ENCODE measurements at regions of chr7 and their contacts with region 1.

Region 1: DNA sequence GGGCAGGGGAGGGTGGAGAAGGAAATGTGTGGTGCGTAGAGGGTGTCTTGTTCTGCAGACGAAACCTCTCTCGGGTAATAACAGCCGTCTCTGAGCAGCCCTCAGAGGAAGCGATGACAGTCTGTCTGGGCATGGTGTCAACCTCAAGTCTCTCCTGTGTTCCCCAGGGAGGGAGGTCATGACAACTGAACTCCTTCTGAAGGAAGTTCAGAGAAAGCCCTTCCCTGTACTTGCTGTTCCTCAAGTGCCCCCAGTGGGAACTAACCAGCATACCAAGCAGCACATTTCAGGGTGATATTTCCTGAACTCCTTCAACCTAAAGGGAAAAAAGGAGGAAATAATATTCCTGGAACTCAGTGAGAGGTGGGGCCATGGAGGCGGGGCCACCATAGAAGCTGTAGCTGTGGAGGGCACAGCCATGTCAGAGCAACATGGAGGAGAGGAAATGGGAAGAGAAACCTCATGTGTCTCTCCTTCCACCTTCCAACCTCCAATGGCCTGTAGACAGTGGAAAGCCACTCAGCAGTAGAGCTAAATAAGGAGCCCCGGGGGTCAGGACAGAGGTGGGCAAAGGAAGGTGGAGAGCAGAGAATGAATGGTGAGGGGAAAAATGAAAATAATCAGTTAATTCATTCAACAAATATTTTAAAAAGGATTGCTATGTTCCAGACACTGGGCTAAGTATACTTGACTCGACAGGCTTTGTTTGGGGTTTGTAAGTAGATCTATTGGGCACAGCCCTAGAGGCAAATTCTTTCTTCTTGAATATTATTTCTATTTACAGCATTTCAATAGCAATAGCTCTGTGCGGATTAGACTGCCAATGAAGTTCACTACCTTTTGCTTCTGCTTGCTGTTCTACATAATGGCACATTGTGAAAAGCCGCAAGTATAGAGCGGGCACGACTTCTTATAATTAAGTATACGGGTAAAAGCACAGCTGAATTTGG is 61.0 kb upstream of the AOAH start:
- DNase-seq: peak; percentile 68
- H3K4me3 Mint-ChIP-seq: no peak overlapping the region
- H3K27ac Mint-ChIP-seq: peak overlapping the region; percentile 2
- H3K4me1 Mint-ChIP-seq: peaks cover 71% of the 10 kb centered on the region
- H3K27me3 Mint-ChIP-seq: no peaks in the 10 kb centered on the region

Region 2: DNA sequence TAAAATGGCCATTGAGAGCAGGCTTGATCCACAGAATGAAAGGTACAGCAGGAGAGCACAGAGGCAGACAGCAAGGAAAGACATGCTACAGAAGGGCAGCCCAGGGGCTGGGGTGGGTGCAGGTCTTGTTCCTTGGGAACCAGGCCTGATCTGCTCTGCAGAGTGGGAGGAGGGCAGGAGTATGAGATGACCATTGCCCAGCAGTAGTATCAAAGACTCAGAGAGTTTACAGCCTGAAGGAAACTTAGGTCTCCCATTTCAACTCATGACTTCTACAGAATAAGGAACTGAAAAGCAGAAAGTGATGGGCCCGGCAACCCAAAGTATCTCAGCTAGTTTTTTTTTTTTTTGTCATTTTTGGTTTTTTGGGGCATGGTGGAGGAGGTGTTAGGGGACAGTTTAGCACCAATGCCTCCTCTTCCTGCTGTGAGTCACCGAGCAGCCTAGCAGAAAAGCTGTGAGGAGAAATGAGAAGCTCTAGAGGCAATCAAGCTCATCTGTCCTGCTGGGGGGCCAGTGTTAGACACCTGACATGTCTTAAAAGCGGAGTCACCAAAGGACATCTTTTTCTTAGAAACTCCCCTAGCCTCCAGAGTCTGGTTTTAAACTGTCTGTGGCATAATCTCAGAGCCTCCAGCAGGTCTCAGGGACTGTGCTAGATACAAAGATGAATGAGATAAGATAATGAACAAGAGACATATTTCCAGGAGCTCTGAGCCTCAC is 1056.0 kb before region 1 on chr7:
- CTCF ChIA-PET with region 1: no interaction called
- intact Hi-C with region 1: loop called (anchors 10 kb)
- DNase-seq: peak; percentile 47
- H3K4me3 Mint-ChIP-seq: no peak overlapping the region
- H3K27ac Mint-ChIP-seq: no peak overlapping the region
- H3K4me1 Mint-ChIP-seq: peaks cover 41% of the 10 kb centered on the region
- H3K27me3 Mint-ChIP-seq: no peaks in the 10 kb centered on the region

Region 3: DNA sequence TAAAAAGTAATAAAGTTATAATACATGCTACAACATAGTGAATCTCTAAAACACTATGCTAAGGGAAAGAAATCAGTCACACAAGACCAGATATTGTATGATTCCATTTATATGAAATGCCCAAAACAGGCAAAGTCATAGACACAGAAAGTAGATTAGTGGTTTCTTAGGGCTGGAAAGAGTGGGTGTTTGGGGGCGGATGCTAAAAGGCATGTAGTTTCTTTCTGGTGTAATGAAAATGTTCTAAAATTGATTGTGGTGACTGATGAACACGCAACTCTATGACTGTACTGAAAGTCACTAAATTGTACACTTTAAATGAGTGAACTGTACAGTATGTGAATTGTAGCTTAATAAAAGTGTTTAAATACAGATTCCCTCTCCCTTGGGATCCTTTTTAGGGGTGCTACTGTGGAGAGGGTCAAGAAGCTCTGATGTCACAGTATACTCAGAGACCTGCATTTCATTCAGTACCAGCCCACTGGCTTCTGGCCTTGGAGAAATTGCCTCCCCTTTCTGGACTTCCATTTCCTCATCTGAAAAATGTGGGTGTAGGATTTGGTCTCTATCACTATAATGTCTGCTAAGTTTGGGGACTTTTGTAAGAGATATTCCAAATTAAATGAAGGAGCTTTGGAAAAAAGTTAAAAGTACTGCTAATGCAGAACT is 107.4 kb before region 1 on chr7:
- CTCF ChIA-PET with region 1: no interaction called
- intact Hi-C with region 1: loop called (anchors 2 kb)
- DNase-seq: peak; percentile 79
- H3K4me3 Mint-ChIP-seq: peak overlapping the region; percentile 31
- H3K27ac Mint-ChIP-seq: peak overlapping the region; percentile 57
- H3K4me1 Mint-ChIP-seq: peaks cover 38% of the 10 kb centered on the region
- H3K27me3 Mint-ChIP-seq: peaks cover 2% of the 10 kb centered on the region

Region 4: DNA sequence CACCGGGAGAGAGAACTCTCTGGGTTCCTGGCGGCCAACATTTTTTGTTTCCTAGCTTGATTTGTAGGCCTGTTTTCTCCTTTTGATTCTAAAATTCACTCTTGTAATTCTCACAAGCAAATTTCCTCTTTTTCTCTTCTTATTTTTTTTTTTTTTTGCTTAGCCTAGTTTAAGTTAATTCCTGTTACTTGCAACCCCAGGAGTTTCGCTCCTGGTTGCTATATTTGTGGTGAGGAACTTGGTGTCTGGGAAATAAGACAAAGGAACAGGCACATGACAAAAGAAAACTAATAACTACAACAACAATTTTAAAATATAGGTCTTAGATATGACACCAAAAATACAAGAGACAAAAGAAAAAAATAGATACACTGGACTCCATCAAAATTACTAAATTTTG is 67.7 kb before region 1 on chr7:
- CTCF ChIA-PET with region 1: no interaction called
- intact Hi-C with region 1: no loop called
- DNase-seq: no peak
- H3K4me3 Mint-ChIP-seq: no peak overlapping the region
- H3K27ac Mint-ChIP-seq: no peak overlapping the region
- H3K4me1 Mint-ChIP-seq: peaks cover 22% of the 10 kb centered on the region
- H3K27me3 Mint-ChIP-seq: no peaks in the 10 kb centered on the region

Region 5: DNA sequence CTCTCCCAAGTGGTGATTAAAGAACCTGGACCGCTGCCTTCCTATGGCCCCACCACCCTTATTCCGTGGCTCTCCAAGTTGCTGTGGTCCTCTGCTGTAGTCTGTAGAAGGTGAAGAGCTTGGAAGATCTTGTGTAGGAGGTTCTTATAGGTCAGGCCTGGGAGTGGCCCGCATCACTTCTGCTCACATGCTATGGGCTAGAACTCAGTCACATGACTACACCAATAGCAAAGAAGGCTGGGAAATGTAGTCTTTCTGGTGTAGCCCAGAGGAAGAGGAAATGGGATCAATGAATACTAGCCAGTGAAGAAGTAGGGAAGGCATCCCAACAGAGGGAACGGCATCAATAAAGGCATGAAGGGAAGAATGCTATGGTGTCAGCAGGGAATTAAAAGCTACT is 19.7 kb before region 1 on chr7:
- CTCF ChIA-PET with region 1: no interaction called
- intact Hi-C with region 1: loop called (anchors 2 kb)
- DNase-seq: no peak
- H3K4me3 Mint-ChIP-seq: no peak overlapping the region
- H3K27ac Mint-ChIP-seq: no peak overlapping the region
- H3K4me1 Mint-ChIP-seq: peaks cover 18% of the 10 kb centered on the region
- H3K27me3 Mint-ChIP-seq: no peaks in the 10 kb centered on the region

Region 6: DNA sequence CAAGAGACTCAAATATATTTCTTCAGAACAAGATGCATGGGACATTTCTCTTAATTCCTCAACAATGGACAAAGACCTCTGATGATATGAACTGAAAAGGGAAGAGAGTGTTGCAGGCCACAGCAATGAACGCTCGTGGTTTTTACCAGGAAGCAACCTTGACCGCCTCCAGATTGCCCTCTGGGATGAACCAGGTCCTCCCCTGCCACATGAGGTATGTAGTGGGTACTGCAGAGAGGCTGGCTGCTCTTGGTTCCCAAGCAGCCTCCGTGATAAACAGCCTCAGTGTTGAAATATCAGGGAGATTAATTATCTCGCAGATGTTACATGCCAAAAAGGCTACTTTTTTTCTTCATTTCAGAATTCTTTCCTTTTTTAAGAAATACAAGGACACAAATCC is 324.6 kb after region 1 on chr7:
- CTCF ChIA-PET with region 1: no interaction called
- intact Hi-C with region 1: no loop called
- DNase-seq: no peak
- H3K4me3 Mint-ChIP-seq: no peak overlapping the region
- H3K27ac Mint-ChIP-seq: no peak overlapping the region
- H3K4me1 Mint-ChIP-seq: peaks cover 50% of the 10 kb centered on the region
- H3K27me3 Mint-ChIP-seq: no peaks in the 10 kb centered on the region

Region 7: GRCh38 chr7:37342688-37343471 is 557.6 kb after region 1 on chr7:
- CTCF ChIA-PET with region 1: no interaction called
- intact Hi-C with region 1: loop called (anchors 5 kb)
- DNase-seq: peak; percentile 86
- H3K4me3 Mint-ChIP-seq: peak overlapping the region; percentile 89
- H3K27ac Mint-ChIP-seq: peak overlapping the region; percentile 97
- H3K4me1 Mint-ChIP-seq: peaks cover 81% of the 10 kb centered on the region
- H3K27me3 Mint-ChIP-seq: no peaks in the 10 kb centered on the region

Measured in activated naive CD4-positive, alpha-beta T cell treated with anti-CD3 and anti-CD28 coated beads for 36 hours (primary cell).